ENCODE measurements at regions of chr5 and their contacts with region 1.

Region 1: GRCh38 chr5:151115274-151115905 is 34.6 kb upstream of the TNIP1 start:
- DNase-seq: peak; percentile 77
- ATAC-seq: peak; percentile 76
- H3K4me3 Mint-ChIP-seq: no peak overlapping the region
- H3K27ac Mint-ChIP-seq: peak overlapping the region; percentile 61
- H3K4me1 Mint-ChIP-seq: peaks cover 2% of the 10 kb centered on the region
- H3K27me3 Mint-ChIP-seq: no peaks in the 10 kb centered on the region

Region 2: DNA sequence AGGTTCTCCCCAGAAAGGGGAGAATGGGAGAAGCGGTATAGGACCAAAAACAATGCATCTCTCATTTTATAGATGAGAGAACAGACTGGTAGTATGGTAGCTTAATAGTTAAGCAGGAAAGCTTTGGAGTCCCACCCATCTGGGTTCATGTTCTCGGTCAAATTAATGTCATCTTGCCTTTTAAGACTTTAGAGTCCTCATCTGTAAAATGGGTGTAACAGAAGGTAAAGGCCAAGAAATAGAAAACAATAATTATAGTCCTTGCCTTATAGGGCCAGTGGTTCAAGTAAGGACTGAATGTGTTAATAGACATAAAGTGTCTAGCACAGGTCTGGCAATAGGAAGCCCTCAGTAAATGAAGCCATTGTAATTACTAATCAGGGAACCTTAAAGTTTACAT is 320.5 kb before region 1 on chr5:
- CTCF ChIA-PET with region 1: no interaction called
- POLR2A ChIA-PET with region 1: no interaction called
- DNase-seq: no peak
- ATAC-seq: no peak
- H3K4me3 Mint-ChIP-seq: no peak overlapping the region
- H3K27ac Mint-ChIP-seq: no peak overlapping the region
- H3K4me1 Mint-ChIP-seq: peaks cover 15% of the 10 kb centered on the region
- H3K27me3 Mint-ChIP-seq: no peaks in the 10 kb centered on the region

Region 3: DNA sequence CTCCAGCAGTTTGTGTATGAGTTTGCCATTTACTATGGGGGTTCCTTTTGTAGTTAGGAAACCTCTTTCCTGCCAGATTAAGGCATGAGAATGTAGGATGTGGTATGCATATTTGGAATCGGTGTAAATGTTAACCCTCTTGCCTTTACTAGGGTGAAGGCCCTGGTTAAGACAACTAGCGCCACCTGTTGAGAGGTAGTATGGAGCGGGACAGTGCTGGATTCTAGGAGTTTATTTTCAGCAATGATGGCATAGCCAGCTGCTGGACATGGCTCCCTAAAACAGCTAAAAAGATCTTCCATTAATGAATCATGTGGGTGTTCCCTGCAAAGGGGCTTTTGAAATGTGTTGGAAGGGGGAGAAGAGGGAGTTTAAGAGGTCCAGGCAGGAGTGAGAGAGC is 125.7 kb before region 1 on chr5:
- CTCF ChIA-PET with region 1: no interaction called
- POLR2A ChIA-PET with region 1: no interaction called
- DNase-seq: no peak
- ATAC-seq: no peak
- H3K4me3 Mint-ChIP-seq: no peak overlapping the region
- H3K27ac Mint-ChIP-seq: no peak overlapping the region
- H3K4me1 Mint-ChIP-seq: no peaks in the 10 kb centered on the region
- H3K27me3 Mint-ChIP-seq: no peaks in the 10 kb centered on the region

Region 4: GRCh38 chr5:151060742-151061141 is 54.6 kb before region 1 on chr5:
- CTCF ChIA-PET with region 1: interaction called, 13 read pairs
- POLR2A ChIA-PET with region 1: interaction called, 3 read pairs
- DNase-seq: no peak
- ATAC-seq: no peak
- H3K4me3 Mint-ChIP-seq: no peak overlapping the region
- H3K27ac Mint-ChIP-seq: peak overlapping the region; percentile 85
- H3K4me1 Mint-ChIP-seq: peaks cover 34% of the 10 kb centered on the region
- H3K27me3 Mint-ChIP-seq: no peaks in the 10 kb centered on the region

Region 5: DNA sequence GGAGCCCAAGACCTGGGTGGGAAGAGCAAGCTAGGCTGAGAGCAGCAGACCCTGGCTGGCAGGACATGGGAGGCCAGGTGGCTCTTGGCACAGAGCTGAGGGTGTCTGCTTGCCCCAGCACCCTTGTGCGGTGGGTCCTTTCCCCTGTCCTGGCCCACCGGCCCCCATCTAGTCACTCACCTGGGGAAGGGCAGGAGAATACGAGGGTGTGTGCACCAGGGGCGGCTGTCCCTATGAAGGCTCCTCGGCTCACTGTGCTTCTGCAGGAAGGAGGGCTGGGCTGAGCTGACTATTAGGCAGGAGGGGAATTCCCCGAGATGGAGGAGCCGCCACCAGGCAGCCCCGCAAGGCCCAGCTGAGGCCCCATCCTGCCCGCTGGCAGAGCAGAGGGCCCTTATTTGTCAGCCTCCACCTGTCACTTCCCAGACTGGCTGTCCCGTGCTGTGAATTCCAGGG is 28.5 kb before region 1 on chr5:
- CTCF ChIA-PET with region 1: interaction called, 98 read pairs
- POLR2A ChIA-PET with region 1: interaction called, 3 read pairs
- DNase-seq: peak; percentile 66
- ATAC-seq: peak; percentile 87
- H3K4me3 Mint-ChIP-seq: peak overlapping the region; percentile 45
- H3K27ac Mint-ChIP-seq: peak overlapping the region; percentile 62
- H3K4me1 Mint-ChIP-seq: peaks cover 64% of the 10 kb centered on the region
- H3K27me3 Mint-ChIP-seq: peaks cover 7% of the 10 kb centered on the region

Region 6: GRCh38 chr5:151126199-151126645 is 10.8 kb after region 1 on chr5:
- CTCF ChIA-PET with region 1: interaction called, 102 read pairs
- POLR2A ChIA-PET with region 1: no interaction called
- DNase-seq: peak; percentile 78
- ATAC-seq: peak; percentile 67
- H3K4me3 Mint-ChIP-seq: no peak overlapping the region
- H3K27ac Mint-ChIP-seq: peak overlapping the region; percentile 88
- H3K4me1 Mint-ChIP-seq: peaks cover 43% of the 10 kb centered on the region
- H3K27me3 Mint-ChIP-seq: no peaks in the 10 kb centered on the region

Region 7: DNA sequence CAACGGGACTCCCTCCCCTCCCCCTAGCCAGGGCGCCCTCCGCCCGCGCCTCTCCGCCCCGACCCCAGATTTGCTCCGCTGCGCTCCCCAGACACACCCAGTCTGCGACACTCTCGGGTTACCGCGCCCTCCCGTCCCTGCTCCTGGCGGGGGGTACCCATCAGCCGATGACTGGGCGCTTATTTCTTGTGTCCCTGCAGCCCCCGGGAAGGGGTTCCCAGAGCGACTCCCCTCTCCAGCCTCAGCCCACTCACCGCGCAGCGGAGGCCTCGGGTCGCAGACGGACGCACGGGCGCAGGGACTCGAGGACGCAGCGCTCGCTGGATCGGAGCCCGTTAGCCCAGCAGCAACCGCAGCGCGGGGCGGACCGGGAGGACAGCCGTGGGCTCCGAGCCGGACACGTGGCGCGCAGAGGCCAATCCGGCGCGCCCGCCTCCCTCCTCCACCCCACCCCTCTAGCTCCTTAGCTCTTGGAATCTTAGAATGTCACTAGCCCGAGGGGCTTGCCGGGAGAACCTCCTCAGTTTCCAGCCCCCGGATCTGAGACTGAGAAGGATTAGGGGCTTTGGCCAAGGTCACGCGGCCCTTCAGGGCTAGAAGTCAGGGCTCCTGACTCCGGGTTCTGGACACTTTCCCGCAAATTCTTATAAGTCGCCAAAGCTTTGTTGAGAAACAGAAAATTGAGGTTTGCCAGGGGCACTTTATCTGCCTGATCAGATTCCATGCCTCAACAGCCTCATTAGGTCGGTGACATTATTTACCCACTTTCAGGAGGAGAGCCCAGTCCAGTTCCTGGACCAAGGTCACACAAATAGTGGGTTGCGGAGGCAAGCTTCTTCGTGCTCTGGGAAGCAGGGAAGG is 42.3 kb after region 1 on chr5 and contains the start of gene ANXA6:
- CTCF ChIA-PET with region 1: interaction called, 491 read pairs
- POLR2A ChIA-PET with region 1: no interaction called
- DNase-seq: peak; percentile 76
- ATAC-seq: peak; percentile 81
- H3K4me3 Mint-ChIP-seq: peak within 1 kb of the TSS; percentile 95
- H3K27ac Mint-ChIP-seq: peak within 1 kb of the TSS; percentile 89
- H3K4me1 Mint-ChIP-seq: peaks cover 47% of the 10 kb centered on the region
- H3K27me3 Mint-ChIP-seq: peaks cover 4% of the 10 kb centered on the region
- total RNA-seq, gene ANXA6: 481 to 495 TPM

Region 8: DNA sequence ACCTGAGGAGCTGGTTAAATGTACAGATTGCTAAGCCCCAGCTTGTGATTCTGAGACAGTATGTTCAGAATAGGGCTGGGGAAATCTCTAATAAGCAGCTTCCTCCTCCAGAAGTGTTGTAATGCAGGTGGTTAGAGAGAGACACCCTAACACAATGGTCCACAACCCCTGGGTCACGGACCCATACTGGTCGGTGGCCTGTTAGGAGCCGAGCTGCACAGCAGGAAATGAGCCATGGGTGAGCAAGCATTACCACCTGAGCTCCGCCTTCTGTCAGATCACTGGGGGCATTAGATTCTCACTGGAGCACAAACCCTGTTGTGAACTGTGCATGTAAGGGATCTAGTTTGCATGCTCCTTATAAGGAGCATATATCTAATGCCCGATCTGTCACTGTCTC is 393.8 kb after region 1 on chr5:
- CTCF ChIA-PET with region 1: no interaction called
- POLR2A ChIA-PET with region 1: no interaction called
- DNase-seq: no peak
- ATAC-seq: no peak
- H3K4me3 Mint-ChIP-seq: no peak overlapping the region
- H3K27ac Mint-ChIP-seq: no peak overlapping the region
- H3K4me1 Mint-ChIP-seq: no peaks in the 10 kb centered on the region
- H3K27me3 Mint-ChIP-seq: no peaks in the 10 kb centered on the region

Measured in activated CD8-positive, alpha-beta T cell treated with anti-CD3 and anti-CD28 coated beads, Interleukin-2, amount 10 ng/mL, durations not matched to agents 7 days and 5 days (primary cell).